Panc1 (cell line): ENCODE measurements at regions of chr19 and their contacts with region 1.

Region 1: GRCh38 chr19:35993923-35994598 is 927 bp upstream of the SDHAF1 start:
- DNase-seq: no peak
- ATAC-seq: peak; percentile 32; the same call in 1 of the 2 replicates
- H3K4me3 ChIP-seq: peak overlapping the region; percentile 82 to 93
- H3K27ac ChIP-seq: peak overlapping the region; percentile 87
- H3K4me1 ChIP-seq: peaks cover 14% of the 10 kb centered on the region
- H3K27me3 ChIP-seq: no peaks in the 10 kb centered on the region
- CTCF ChIP-seq: peak; percentile 80

Region 2: DNA sequence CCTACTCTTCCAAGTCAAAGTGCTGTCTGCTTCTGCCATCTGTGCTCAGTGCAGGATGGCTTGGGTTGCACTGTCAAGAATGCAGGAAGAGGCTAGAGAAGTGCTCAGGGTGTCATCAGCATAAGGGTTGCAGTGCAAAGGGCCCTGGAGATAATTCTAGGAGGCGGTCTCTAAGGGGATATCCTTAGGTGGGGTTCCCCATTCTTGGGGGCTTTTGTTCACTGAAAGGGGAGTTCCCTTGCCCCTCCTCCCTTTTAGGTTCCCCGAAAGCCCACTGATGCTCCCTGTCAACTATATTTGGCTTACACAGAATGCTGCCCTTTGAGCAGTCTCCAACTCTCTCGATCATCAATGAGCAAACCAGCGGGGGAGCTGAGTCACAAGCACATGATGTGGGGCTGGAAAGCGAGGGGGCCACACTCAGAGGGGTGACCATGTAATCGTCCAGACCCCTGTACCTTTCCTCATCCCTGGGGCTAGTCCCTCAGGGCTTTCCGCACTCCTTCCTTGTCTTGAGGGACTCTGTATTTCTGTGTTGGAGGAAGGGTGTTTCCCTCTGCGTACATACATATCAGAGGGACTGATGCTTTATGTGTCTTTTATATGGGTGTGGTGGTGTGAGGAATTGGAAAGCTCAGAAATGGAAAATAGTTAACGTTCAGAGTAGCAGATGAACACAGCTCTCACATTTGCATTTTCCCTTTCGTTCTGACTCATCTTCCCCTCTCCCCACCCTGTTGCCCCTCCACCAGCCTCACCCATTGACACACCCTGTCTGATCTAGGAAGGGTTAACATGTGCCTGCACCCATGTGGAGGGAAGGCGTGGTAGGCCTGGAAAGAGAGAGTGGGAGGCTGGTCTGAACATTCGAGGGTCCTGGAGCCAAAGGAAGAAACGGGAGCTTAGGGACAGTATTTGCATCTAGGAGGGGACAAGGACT is 283.0 kb before region 1 on chr19:
- CTCF ChIA-PET with region 1: no interaction called
- POLR2A ChIA-PET with region 1: no interaction called
- in situ Hi-C with region 1: no loop called
- intact Hi-C with region 1: no loop called
- DNase-seq: no peak
- ATAC-seq: no peak
- H3K4me3 ChIP-seq: no peak overlapping the region
- H3K27ac ChIP-seq: no peak overlapping the region
- H3K4me1 ChIP-seq: peaks cover 9% of the 10 kb centered on the region
- H3K27me3 ChIP-seq: no peaks in the 10 kb centered on the region
- CTCF ChIP-seq: no peak

Region 3: GRCh38 chr19:35937345-35938281 is 56.4 kb before region 1 on chr19:
- CTCF ChIA-PET with region 1: no interaction called
- POLR2A ChIA-PET with region 1: interaction called, 18 read pairs
- in situ Hi-C with region 1: no loop called
- intact Hi-C with region 1: no loop called
- DNase-seq: no peak
- ATAC-seq: peak; percentile 5; the same call in 1 of the 2 replicates
- H3K4me3 ChIP-seq: peak overlapping the region; percentile 67 to 71
- H3K27ac ChIP-seq: peak overlapping the region; percentile 82
- H3K4me1 ChIP-seq: peaks cover 16% of the 10 kb centered on the region
- H3K27me3 ChIP-seq: no peaks in the 10 kb centered on the region
- CTCF ChIP-seq: no peak

Region 4: DNA sequence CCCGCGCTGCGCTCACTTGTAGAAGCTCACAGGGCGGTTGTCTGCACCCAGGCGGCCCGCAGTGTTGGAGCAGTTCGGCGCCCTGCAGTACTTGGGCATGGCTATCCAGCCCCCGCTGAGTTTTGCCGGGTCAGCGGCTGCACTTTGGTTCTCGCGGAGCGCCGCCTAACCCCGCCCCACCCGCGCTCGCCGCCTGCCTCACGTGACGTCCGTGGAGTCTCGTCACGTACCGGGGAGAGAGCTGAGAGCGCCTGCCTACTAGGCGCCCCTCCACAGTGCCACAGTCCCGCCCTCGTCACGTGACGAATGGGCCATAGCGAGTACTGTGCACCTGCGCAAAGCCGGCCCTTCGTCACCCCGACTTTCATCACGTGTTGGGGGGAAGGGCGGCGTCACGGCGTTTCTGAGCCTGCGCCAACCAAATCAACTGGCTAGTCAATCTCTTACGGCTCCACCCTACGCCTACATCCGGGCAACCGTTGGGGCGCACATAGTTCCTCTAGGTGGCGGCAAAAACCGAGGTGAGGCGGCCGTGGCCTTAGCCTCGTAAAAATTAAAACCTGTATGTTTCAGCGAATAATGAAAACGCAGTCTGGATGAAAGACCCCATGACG is 60.2 kb after region 1 on chr19 and contains the start of gene THAP8:
- CTCF ChIA-PET with region 1: no interaction called
- POLR2A ChIA-PET with region 1: interaction called, 13 read pairs
- in situ Hi-C with region 1: no loop called
- intact Hi-C with region 1: no loop called
- DNase-seq: peak; percentile 99
- ATAC-seq: peak; percentile 91
- H3K4me3 ChIP-seq: peak within 1 kb of the TSS; percentile 79 to 99
- H3K27ac ChIP-seq: peak within 1 kb of the TSS; percentile 97
- H3K4me1 ChIP-seq: peaks cover 6% of the 10 kb centered on the region
- H3K27me3 ChIP-seq: no peaks in the 10 kb centered on the region
- CTCF ChIP-seq: peak; percentile 74
- total RNA-seq, gene THAP8: 9.6 TPM